ENCODE measurements at regions of chr17 and their contacts with region 1.

Region 1: GRCh38 chr17:68398691-68399637 is 58.3 kb downstream of the WIPI1 start:
- DNase-seq: peak; percentile 82 to 96
- ATAC-seq: peak; percentile 94 to 97
- H3K4me3 ChIP-seq: no peak overlapping the region
- H3K27ac ChIP-seq: peak overlapping the region; percentile 37 to 64; a peak in 5 of 6 replicates
- H3K4me1 ChIP-seq: 0 out of 3 replicates have a peak, but pooled peaks cover 3% of the 10 kb centered on the region
- CTCF ChIP-seq: peak; percentile 95
- EP300 ChIP-seq: no peak
- POLR2A ChIP-seq: no peak
- RAD21 ChIP-seq: peak; percentile 92 to 95

Region 2: DNA sequence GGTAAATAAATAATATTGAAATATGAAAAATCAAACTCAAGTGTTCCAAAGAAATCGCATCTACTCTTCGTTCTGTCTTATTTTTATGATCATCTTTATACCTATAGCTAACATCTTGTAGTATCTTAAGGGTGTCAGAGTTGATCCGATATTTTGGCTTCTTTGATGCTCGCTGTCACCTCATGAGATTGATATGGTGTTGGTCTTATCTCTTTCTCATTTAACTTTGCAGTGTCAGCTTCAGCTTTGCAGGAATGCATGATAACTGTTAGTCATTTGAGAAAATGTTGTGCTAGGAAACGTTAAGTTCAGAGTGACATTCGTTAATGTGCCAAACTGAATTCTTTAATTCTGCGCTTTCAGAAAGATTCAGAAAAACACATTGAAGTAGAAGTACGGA is 661.8 kb before region 1 on chr17:
- CTCF ChIA-PET with region 1: no interaction called
- POLR2A ChIA-PET with region 1: no interaction called
- DNase-seq: no peak
- ATAC-seq: no peak
- H3K4me3 ChIP-seq: no peak overlapping the region
- H3K27ac ChIP-seq: no peak overlapping the region
- H3K4me1 ChIP-seq: no peaks in the 10 kb centered on the region
- CTCF ChIP-seq: no peak
- EP300 ChIP-seq: no peak
- POLR2A ChIP-seq: no peak
- RAD21 ChIP-seq: no peak

Region 3: GRCh38 chr17:68273722-68274121 is 125.2 kb before region 1 on chr17:
- CTCF ChIA-PET with region 1: interaction called, 19 read pairs
- POLR2A ChIA-PET with region 1: interaction called, 3 read pairs
- DNase-seq: no peak
- ATAC-seq: no peak
- H3K4me3 ChIP-seq: no peak overlapping the region
- H3K27ac ChIP-seq: no peak overlapping the region
- H3K4me1 ChIP-seq: no peaks in the 10 kb centered on the region
- CTCF ChIP-seq: no peak
- EP300 ChIP-seq: no peak
- POLR2A ChIP-seq: no peak
- RAD21 ChIP-seq: no peak

Region 4: GRCh38 chr17:68318103-68318991 is 80.6 kb before region 1 on chr17:
- CTCF ChIA-PET with region 1: interaction called, 11 read pairs
- POLR2A ChIA-PET with region 1: no interaction called
- DNase-seq: peak; percentile 43 to 53
- ATAC-seq: peak; percentile 67 to 84
- H3K4me3 ChIP-seq: no peak overlapping the region
- H3K27ac ChIP-seq: no peak overlapping the region
- H3K4me1 ChIP-seq: peaks cover 11% of the 10 kb centered on the region
- CTCF ChIP-seq: no peak
- EP300 ChIP-seq: no peak
- POLR2A ChIP-seq: no peak
- RAD21 ChIP-seq: no peak

Region 5: GRCh38 chr17:68346448-68346847 is 52.5 kb before region 1 on chr17:
- CTCF ChIA-PET with region 1: interaction called, 28 read pairs
- POLR2A ChIA-PET with region 1: no interaction called
- DNase-seq: no peak
- ATAC-seq: no peak
- H3K4me3 ChIP-seq: no peak overlapping the region
- H3K27ac ChIP-seq: no peak overlapping the region
- H3K4me1 ChIP-seq: no peaks in the 10 kb centered on the region
- CTCF ChIP-seq: no peak
- EP300 ChIP-seq: no peak
- POLR2A ChIP-seq: no peak
- RAD21 ChIP-seq: no peak

Region 6: GRCh38 chr17:68383443-68384321 is 15.3 kb before region 1 on chr17:
- CTCF ChIA-PET with region 1: interaction called, 38 read pairs
- POLR2A ChIA-PET with region 1: no interaction called
- DNase-seq: peak in 1 of 2 experiments; percentile 50
- ATAC-seq: peak in 1 of 2 experiments; percentile 5; a peak in 2 of 6 replicates
- H3K4me3 ChIP-seq: no peak overlapping the region
- H3K27ac ChIP-seq: peak overlapping the region; percentile 38 to 50; a peak in 4 of 6 replicates
- H3K4me1 ChIP-seq: peaks cover 47% of the 10 kb centered on the region
- CTCF ChIP-seq: no peak
- EP300 ChIP-seq: no peak
- POLR2A ChIP-seq: no peak
- RAD21 ChIP-seq: no peak

Region 7: GRCh38 chr17:68435876-68436842 is 37.2 kb after region 1 on chr17:
- CTCF ChIA-PET with region 1: interaction called, 65 read pairs
- POLR2A ChIA-PET with region 1: no interaction called
- DNase-seq: peak; percentile 78 to 82
- ATAC-seq: peak; percentile 82 to 91
- H3K4me3 ChIP-seq: no peak overlapping the region
- H3K27ac ChIP-seq: no peak overlapping the region
- H3K4me1 ChIP-seq: 0 out of 3 replicates have a peak, but pooled peaks cover 3% of the 10 kb centered on the region
- CTCF ChIP-seq: peak; percentile 91
- EP300 ChIP-seq: no peak
- POLR2A ChIP-seq: no peak
- RAD21 ChIP-seq: peak; percentile 85 to 95

Region 8: GRCh38 chr17:68533887-68534694 is 135.1 kb after region 1 on chr17:
- CTCF ChIA-PET with region 1: no interaction called
- POLR2A ChIA-PET with region 1: no interaction called
- DNase-seq: peak in 1 of 2 experiments; percentile 39
- ATAC-seq: 0 out of 6 replicates have a peak, but pooled peaks of 1 of the 2 experiments have one; percentile 21
- H3K4me3 ChIP-seq: no peak overlapping the region
- H3K27ac ChIP-seq: no peak overlapping the region
- H3K4me1 ChIP-seq: no peaks in the 10 kb centered on the region
- CTCF ChIP-seq: peak; percentile 49
- EP300 ChIP-seq: no peak
- POLR2A ChIP-seq: no peak
- RAD21 ChIP-seq: peak; percentile 32 to 37; a peak in 2 of 5 replicates

Region 9: GRCh38 chr17:68560966-68561720 is 162.2 kb after region 1 on chr17:
- CTCF ChIA-PET with region 1: no interaction called
- POLR2A ChIA-PET with region 1: no interaction called
- DNase-seq: no peak
- ATAC-seq: no peak
- H3K4me3 ChIP-seq: no peak overlapping the region
- H3K27ac ChIP-seq: no peak overlapping the region
- H3K4me1 ChIP-seq: no peaks in the 10 kb centered on the region
- CTCF ChIP-seq: no peak
- EP300 ChIP-seq: no peak
- POLR2A ChIP-seq: no peak
- RAD21 ChIP-seq: no peak

Measured in A549 (cell line).